Mammary epithelial cell (primary cell): ENCODE measurements at regions of chr1 and their contacts with region 1.

Region 1: GRCh38 chr1:201970334-201971159 is 11.9 kb upstream of the RNPEP start:
- DNase-seq: no peak
- H3K4me3 ChIP-seq: no peak overlapping the region
- H3K27ac ChIP-seq: no peak overlapping the region
- H3K4me1 ChIP-seq: peaks cover 7% of the 10 kb centered on the region
- H3K27me3 ChIP-seq: no peaks in the 10 kb centered on the region
- CTCF ChIP-seq: no peak

Region 2: DNA sequence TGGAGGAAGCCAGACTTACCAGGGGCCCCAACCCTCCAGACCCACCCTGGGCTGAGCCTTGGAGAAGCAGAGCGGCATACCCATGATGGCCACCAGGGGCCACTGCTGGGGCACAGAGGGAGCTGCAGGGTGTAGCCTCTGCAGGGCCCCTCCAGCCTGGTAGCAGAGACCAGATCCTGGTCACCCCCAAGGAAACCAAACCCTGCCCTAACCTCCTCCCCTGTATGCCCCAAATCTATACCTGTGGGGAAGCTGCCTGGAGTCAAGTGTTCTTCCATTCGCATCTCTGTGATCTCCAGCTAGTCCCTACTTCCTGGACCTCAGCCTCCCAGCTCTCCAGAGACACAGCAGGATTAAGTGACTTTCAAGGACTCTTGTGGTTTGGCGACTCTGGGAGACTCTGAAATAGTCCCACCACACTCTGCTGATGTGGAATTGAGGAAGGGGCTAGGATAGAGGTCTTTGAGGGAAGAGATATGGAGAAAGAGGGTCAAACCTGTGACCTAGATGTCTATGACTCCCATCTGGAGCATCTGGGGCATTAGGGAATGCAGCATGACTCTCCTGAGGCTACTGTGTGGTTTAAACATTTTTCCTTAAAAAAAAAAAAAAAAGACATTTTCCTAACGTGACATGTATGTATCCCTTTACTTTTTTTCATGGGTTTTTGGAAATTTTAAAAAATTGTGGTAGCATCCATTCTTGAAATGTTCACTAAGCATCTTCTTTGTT is 260.8 kb before region 1 on chr1:
- CTCF ChIA-PET with region 1: no interaction called
- dilution Hi-C with region 1: no loop called
- in situ Hi-C with region 1: no loop called
- intact Hi-C with region 1: loop called (anchors 2 kb)
- DNase-seq: peak; percentile 35
- H3K4me3 ChIP-seq: no peak overlapping the region
- H3K27ac ChIP-seq: no peak overlapping the region
- H3K4me1 ChIP-seq: peaks cover 45% of the 10 kb centered on the region
- H3K27me3 ChIP-seq: no peaks in the 10 kb centered on the region
- CTCF ChIP-seq: peak; percentile 80 to 93

Region 3: DNA sequence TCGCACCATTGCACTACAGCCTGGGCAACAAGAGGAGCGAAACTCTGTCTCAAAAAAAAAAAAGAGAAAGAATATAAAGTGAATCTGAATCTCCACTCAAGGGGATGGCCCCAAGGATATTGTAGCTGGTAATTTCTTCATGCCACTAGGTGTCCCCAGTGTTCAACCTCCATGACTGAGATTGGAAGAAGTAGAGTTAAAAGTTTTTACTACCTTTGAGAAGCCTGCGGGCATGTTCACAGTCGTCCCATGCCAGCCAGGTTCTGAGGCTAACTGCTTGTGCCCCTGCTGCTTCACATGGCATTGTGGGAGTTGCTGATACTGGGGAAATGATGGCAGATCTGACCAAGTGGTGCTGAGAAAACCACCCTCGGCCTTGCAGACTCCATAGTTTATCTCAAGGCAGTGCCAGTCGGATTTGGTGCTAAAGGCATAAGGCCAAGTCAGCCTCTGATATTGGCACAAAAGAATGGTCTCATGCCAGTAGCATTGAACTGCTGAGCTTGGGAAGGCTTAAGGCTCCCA is 92.6 kb before region 1 on chr1:
- CTCF ChIA-PET with region 1: no interaction called
- dilution Hi-C with region 1: no loop called
- in situ Hi-C with region 1: no loop called
- intact Hi-C with region 1: loop called (anchors 1 kb)
- DNase-seq: peak; percentile 58
- H3K4me3 ChIP-seq: no peak overlapping the region
- H3K27ac ChIP-seq: no peak overlapping the region
- H3K4me1 ChIP-seq: peaks cover 12% of the 10 kb centered on the region
- H3K27me3 ChIP-seq: no peaks in the 10 kb centered on the region
- CTCF ChIP-seq: peak; percentile 68 to 73

Region 4: DNA sequence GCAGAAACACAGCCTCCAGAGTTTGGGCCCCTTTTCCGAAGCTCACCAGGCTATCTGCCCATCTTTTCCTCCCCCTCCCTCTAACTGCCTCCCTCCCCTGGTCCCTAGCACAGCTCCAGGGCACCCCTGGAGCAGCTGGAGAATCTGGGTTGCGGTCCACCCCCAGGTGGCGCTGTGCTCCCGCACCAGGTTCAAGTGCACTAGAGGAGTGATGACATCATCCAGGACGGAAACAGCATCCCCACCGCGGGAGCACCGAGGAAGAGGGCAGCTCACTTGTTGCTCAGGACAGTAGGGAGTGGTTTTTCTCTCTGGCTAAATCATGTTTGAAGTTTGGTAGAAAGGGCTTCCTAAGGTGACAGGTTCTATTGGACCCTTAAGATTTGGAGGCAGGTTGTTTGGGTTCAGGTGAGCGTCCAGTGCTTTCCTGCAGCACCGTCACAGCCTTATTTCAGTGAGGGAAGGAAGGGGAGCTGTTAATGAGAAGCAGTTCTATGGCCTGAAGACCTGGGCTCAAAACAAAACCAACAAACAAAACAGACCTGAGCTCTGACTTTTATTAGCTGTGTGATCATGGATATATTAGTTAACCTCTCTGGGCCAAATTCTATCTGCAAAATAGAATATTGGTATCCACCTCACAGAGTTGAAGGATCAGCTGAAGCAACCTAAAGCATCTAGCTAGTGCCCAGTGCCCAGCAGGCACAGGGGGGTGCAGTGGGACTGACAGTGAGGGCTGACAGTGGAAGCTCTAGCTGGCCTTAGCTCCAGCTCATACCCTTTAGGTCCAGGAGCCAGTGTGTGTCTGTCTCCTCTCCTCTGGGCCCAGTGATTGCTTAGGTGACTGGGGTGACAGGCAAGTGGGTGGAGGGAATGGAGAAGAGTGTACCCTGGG is 74.4 kb before region 1 on chr1:
- CTCF ChIA-PET with region 1: interaction called, 9 read pairs
- dilution Hi-C with region 1: no loop called
- in situ Hi-C with region 1: loop called (anchors 5 kb)
- intact Hi-C with region 1: loop called (anchors 1 kb)
- DNase-seq: peak; percentile 78
- H3K4me3 ChIP-seq: no peak overlapping the region
- H3K27ac ChIP-seq: no peak overlapping the region
- H3K4me1 ChIP-seq: peaks cover 21% of the 10 kb centered on the region
- H3K27me3 ChIP-seq: no peaks in the 10 kb centered on the region
- CTCF ChIP-seq: peak; percentile 89 to 98

Region 5: GRCh38 chr1:202018468-202019255 is 48.1 kb after region 1 on chr1:
- CTCF ChIA-PET with region 1: no interaction called
- dilution Hi-C with region 1: no loop called
- in situ Hi-C with region 1: no loop called
- intact Hi-C with region 1: no loop called
- DNase-seq: peak; percentile 84
- H3K4me3 ChIP-seq: no peak overlapping the region
- H3K27ac ChIP-seq: peak overlapping the region; percentile 22
- H3K4me1 ChIP-seq: peaks cover 44% of the 10 kb centered on the region
- H3K27me3 ChIP-seq: no peaks in the 10 kb centered on the region
- CTCF ChIP-seq: no peak

Region 6: DNA sequence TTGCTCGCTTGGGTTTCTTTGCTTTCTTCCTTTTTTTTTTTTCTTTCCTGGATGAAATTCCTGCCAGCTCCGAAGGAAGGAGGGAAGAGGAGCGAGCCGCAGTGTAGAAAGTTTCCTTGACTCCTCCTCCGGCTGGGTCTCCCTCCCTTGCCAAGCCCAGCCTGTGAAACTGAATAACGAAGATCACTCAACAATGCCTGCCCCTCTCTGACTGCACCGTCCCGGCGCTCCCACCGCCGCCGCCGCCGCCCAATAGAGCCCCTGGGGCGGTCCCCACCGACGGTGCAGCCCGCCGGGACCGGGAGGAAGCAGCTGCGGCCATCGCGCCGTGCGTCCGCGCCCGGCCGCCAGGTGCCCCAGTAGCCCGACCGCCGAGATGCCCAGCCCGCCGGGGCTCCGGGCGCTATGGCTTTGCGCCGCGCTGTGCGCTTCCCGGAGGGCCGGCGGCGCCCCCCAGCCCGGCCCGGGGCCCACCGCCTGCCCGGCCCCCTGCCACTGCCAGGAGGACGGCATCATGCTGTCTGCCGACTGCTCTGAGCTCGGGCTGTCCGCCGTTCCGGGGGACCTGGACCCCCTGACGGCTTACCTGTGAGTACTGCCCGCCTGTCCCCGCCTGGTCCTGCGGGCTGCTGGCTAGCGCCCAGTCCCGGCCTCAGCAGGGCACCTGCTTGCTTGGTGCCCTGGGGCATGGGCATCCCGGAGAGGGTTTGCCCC is 223.2 kb after region 1 on chr1 and contains the start of gene LGR6:
- CTCF ChIA-PET with region 1: no interaction called
- dilution Hi-C with region 1: no loop called
- in situ Hi-C with region 1: no loop called
- intact Hi-C with region 1: no loop called
- DNase-seq: no peak
- H3K4me3 ChIP-seq: no peak within 1 kb of the TSS
- H3K27ac ChIP-seq: no peak within 1 kb of the TSS
- H3K4me1 ChIP-seq: no peaks in the 10 kb centered on the region
- H3K27me3 ChIP-seq: peaks cover 17% of the 10 kb centered on the region
- CTCF ChIP-seq: no peak
- total RNA-seq, gene LGR6: 0.45 to 0.50 TPM

Region 7: GRCh38 chr1:202247894-202248681 is 277.5 kb after region 1 on chr1:
- CTCF ChIA-PET with region 1: no interaction called
- dilution Hi-C with region 1: no loop called
- in situ Hi-C with region 1: no loop called
- intact Hi-C with region 1: no loop called
- DNase-seq: no peak
- H3K4me3 ChIP-seq: no peak overlapping the region
- H3K27ac ChIP-seq: no peak overlapping the region
- H3K4me1 ChIP-seq: no peaks in the 10 kb centered on the region
- H3K27me3 ChIP-seq: peaks cover 3% of the 10 kb centered on the region
- CTCF ChIP-seq: no peak